Activated B cell treated with CpG ODN at 0.5 μM for 24 hours (primary cell): ENCODE measurements at regions of chr7 and their contacts with region 1.

Region 1: GRCh38 chr7:128862571-128863432 is at the start of gene ATP6V1F:
- DNase-seq: peak; percentile 99
- ATAC-seq: peak; percentile 92
- H3K4me3 Mint-ChIP-seq: peak within 1 kb of the TSS; percentile 97
- H3K27ac Mint-ChIP-seq: peak within 1 kb of the TSS; percentile 96
- H3K4me1 Mint-ChIP-seq: peaks cover 30% of the 10 kb centered on the region
- H3K27me3 Mint-ChIP-seq: no peaks in the 10 kb centered on the region
- CTCF ChIP-seq: no peak
- total RNA-seq, gene ATP6V1F: 100.0 and 113 TPM in 2 replicates

Region 2: DNA sequence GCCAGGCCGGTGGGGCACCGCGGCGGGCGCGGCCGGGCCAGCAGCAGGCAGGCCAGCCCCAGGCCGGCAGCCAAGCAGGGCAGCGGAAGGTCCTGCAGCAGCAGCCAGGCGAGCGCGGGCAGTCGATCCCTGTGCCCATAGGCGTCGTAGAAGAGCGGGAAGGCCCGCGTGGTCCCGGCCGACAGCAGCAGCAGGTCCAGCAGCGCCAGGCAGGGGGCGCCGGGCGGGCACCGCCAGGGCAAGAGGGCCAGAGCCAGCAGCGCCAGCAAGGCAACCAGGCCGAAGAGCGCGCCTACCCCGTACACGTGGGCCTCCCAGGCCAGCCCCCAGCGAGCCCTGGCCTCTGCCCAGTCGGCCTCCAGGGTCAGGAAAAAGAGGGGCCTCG is 510.7 kb before region 1 on chr7:
- CTCF ChIA-PET with region 1: no interaction called
- POLR2A ChIA-PET with region 1: no interaction called
- intact Hi-C with region 1: no loop called
- DNase-seq: no peak
- ATAC-seq: peak; percentile 32
- H3K4me3 Mint-ChIP-seq: no peak overlapping the region
- H3K27ac Mint-ChIP-seq: no peak overlapping the region
- H3K4me1 Mint-ChIP-seq: peaks cover 6% of the 10 kb centered on the region
- H3K27me3 Mint-ChIP-seq: peaks cover 31% of the 10 kb centered on the region
- CTCF ChIP-seq: no peak

Region 3: GRCh38 chr7:128409596-128410160 is 453.1 kb before region 1 on chr7 and contains the start of gene IMPDH1:
- CTCF ChIA-PET with region 1: no interaction called
- POLR2A ChIA-PET with region 1: no interaction called
- intact Hi-C with region 1: loop called (anchors 10 kb)
- DNase-seq: peak; percentile 91
- ATAC-seq: peak; percentile 76
- H3K4me3 Mint-ChIP-seq: peak within 1 kb of the TSS; percentile 91
- H3K27ac Mint-ChIP-seq: peak within 1 kb of the TSS; percentile 72
- H3K4me1 Mint-ChIP-seq: peaks cover 40% of the 10 kb centered on the region
- H3K27me3 Mint-ChIP-seq: no peaks in the 10 kb centered on the region
- CTCF ChIP-seq: no peak
- total RNA-seq, gene IMPDH1: 42.3 and 45.8 TPM in 2 replicates

Region 4: DNA sequence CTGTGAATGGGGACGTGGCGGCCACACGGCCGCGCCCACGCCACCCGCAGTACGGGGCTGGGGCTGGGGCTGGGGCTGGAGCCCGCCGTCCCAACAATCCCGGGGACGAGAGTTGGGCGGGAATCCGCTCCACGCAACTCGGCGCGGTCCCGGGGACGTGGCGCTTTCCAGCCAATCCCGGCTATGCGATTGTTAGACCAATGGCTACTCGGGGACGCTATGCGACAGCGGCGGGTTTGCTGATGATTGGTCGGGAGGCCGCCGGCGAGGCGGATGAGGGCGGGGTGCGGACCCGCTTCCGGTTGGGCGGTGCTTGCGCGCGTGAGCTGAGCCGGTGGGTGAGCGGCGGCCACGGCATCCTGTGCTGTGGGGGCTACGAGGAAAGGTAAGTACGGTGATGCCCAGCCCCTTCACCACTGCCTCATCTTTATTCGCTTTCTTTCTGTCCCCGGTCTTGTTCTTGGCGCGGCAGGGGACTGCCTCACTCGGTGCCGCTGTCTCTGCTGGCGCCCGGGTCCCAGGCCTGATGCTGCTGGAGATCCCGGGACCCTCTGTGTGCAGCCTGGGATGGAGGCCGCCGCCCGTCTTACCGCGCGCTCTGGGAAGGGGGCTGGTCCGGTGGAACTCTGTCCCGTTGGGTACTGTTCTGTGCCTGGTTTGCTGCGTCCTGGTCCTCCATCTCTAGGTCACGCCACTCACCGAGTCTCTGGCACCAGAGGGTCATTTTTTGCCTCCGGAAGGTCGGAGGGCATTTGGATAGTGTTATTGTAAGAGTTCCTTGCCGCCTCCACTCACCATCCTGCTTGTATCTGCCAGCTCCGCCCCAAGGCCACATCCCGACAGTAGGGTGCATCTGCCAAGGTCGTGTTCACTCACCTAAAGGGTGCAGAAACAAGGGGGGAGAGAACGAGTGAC is 123.5 kb before region 1 on chr7 and contains the start of gene CALU:
- CTCF ChIA-PET with region 1: no interaction called
- POLR2A ChIA-PET with region 1: interaction called, 3 read pairs
- intact Hi-C with region 1: loop called (anchors 1 kb)
- DNase-seq: peak; percentile 89
- ATAC-seq: peak; percentile 96
- H3K4me3 Mint-ChIP-seq: peak within 1 kb of the TSS; percentile 97
- H3K27ac Mint-ChIP-seq: peak within 1 kb of the TSS; percentile 88
- H3K4me1 Mint-ChIP-seq: peaks cover 30% of the 10 kb centered on the region
- H3K27me3 Mint-ChIP-seq: no peaks in the 10 kb centered on the region
- CTCF ChIP-seq: no peak
- total RNA-seq, gene CALU: 14.7 and 15.4 TPM in 2 replicates

Region 5: DNA sequence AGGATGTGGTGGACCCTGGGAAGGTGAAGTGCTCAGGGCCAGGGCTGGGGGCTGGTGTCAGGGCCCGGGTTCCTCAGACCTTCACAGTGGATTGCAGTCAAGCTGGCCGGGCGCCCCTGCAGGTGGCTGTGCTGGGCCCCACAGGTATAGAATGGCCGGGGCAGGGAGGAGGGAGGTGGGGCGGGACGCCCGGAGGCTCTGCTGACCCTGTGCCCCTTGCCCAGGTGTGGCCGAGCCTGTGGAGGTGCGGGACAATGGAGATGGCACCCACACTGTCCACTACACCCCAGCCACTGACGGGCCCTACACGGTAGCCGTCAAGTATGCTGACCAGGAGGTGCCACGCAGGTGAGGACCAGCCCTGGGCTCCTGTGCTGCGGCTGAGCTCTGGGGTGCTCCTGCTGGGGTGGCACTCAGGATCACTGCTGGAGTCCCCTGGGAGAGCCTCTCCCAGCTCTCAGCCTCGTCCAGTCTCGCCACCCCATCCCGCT is 15.0 kb before region 1 on chr7:
- CTCF ChIA-PET with region 1: interaction called, 6 read pairs
- POLR2A ChIA-PET with region 1: no interaction called
- intact Hi-C with region 1: loop called (anchors 2 kb)
- DNase-seq: no peak
- ATAC-seq: no peak
- H3K4me3 Mint-ChIP-seq: no peak overlapping the region
- H3K27ac Mint-ChIP-seq: no peak overlapping the region
- H3K4me1 Mint-ChIP-seq: no peaks in the 10 kb centered on the region
- H3K27me3 Mint-ChIP-seq: no peaks in the 10 kb centered on the region
- CTCF ChIP-seq: no peak

Region 6: GRCh38 chr7:129122751-129123509 is 260.1 kb after region 1 on chr7:
- CTCF ChIA-PET with region 1: no interaction called
- POLR2A ChIA-PET with region 1: interaction called, 12 read pairs
- intact Hi-C with region 1: no loop called
- DNase-seq: peak; percentile 53
- ATAC-seq: peak; percentile 89
- H3K4me3 Mint-ChIP-seq: peak overlapping the region; percentile 73
- H3K27ac Mint-ChIP-seq: peak overlapping the region; percentile 96
- H3K4me1 Mint-ChIP-seq: peaks cover 40% of the 10 kb centered on the region
- H3K27me3 Mint-ChIP-seq: no peaks in the 10 kb centered on the region
- CTCF ChIP-seq: no peak